Activated T-helper 1 cell treated with anti-CD3 and anti-CD28 coated beads, Interleukin-12 subunit alpha, Interleukin-12 subunit beta, Interleukin-2, Interleukin-4 antibody, amounts not matched to agents 30 ng/mL and 10 ng/mL and 1 ng/mL, durations not matched to agents 14 hours and 24 hours and 36 hours (primary cell): ENCODE measurements at regions of chr12 and their contacts with region 1.

Region 1: GRCh38 chr12:27652174-27652763 is 44.0 kb upstream of the REP15 start:
- DNase-seq: peak; percentile 23
- H3K4me3 Mint-ChIP-seq: no peak overlapping the region
- H3K27ac Mint-ChIP-seq: no peak overlapping the region
- H3K4me1 Mint-ChIP-seq: peaks cover 42% of the 10 kb centered on the region
- H3K27me3 Mint-ChIP-seq: no peaks in the 10 kb centered on the region

Region 2: DNA sequence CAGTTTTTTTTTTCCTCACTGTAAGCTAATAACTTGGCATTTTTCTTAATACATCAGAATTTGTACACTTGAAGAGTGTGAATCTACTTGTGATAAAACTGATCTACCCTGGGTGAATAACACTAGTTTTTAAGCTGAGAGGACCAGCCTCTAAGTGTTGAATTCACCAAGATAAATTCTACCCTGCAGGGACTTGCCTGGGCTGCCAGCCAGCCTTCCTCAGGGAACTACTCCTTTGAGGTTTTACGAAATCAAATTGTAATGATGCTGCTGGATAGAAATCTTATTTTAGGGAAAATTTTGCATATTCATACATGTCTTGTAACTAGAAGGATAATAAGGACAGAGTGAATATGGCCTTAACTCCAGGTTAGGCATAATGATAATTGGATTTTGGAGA is 628.0 kb before region 1 on chr12:
- intact Hi-C with region 1: loop called (anchors 5 kb)
- DNase-seq: no peak
- H3K4me3 Mint-ChIP-seq: peak overlapping the region; percentile 43
- H3K27ac Mint-ChIP-seq: no peak overlapping the region
- H3K4me1 Mint-ChIP-seq: peaks cover 46% of the 10 kb centered on the region
- H3K27me3 Mint-ChIP-seq: peaks cover 2% of the 10 kb centered on the region

Region 3: GRCh38 chr12:27523642-27524493 is 128.4 kb before region 1 on chr12 and contains the start of gene PPFIBP1:
- intact Hi-C with region 1: loop called (anchors 2 kb)
- DNase-seq: peak; percentile 83
- H3K4me3 Mint-ChIP-seq: peak within 1 kb of the TSS; percentile 89
- H3K27ac Mint-ChIP-seq: peak within 1 kb of the TSS; percentile 90
- H3K4me1 Mint-ChIP-seq: peaks cover 56% of the 10 kb centered on the region
- H3K27me3 Mint-ChIP-seq: peaks cover 19% of the 10 kb centered on the region
- total RNA-seq, gene PPFIBP1: 53.8 and 55.7 TPM in 2 replicates

Region 4: GRCh38 chr12:27549801-27550652 is 102.2 kb before region 1 on chr12:
- intact Hi-C with region 1: loop called (anchors 5 kb)
- DNase-seq: no peak
- H3K4me3 Mint-ChIP-seq: no peak overlapping the region
- H3K27ac Mint-ChIP-seq: no peak overlapping the region
- H3K4me1 Mint-ChIP-seq: peaks cover 48% of the 10 kb centered on the region
- H3K27me3 Mint-ChIP-seq: peaks cover 6% of the 10 kb centered on the region

Region 5: GRCh38 chr12:27703710-27704452 is 51.6 kb after region 1 on chr12:
- intact Hi-C with region 1: loop called (anchors 2 kb)
- DNase-seq: peak; percentile 62
- H3K4me3 Mint-ChIP-seq: no peak overlapping the region
- H3K27ac Mint-ChIP-seq: no peak overlapping the region
- H3K4me1 Mint-ChIP-seq: no peaks in the 10 kb centered on the region
- H3K27me3 Mint-ChIP-seq: peaks cover 11% of the 10 kb centered on the region